ENCODE measurements at regions of chr17 and their contacts with region 1.

Region 1: GRCh38 chr17:48492401-48493298 is 38.2 kb downstream of the HOXB1 start:
- DNase-seq: peak; percentile 70
- ATAC-seq: peak; percentile 89
- H3K4me3 Mint-ChIP-seq: peak overlapping the region; percentile 48
- H3K27ac Mint-ChIP-seq: no peak overlapping the region
- H3K4me1 Mint-ChIP-seq: peaks cover 14% of the 10 kb centered on the region
- H3K27me3 Mint-ChIP-seq: peaks cover 26% of the 10 kb centered on the region
- CTCF ChIP-seq: peak; percentile 96

Region 2: GRCh38 chr17:48335858-48336500 is 156.7 kb before region 1 on chr17:
- CTCF ChIA-PET with region 1: interaction called, 12 read pairs
- POLR2A ChIA-PET with region 1: interaction called, 3 read pairs
- intact Hi-C with region 1: no loop called
- DNase-seq: no peak
- ATAC-seq: peak; percentile 61
- H3K4me3 Mint-ChIP-seq: no peak overlapping the region
- H3K27ac Mint-ChIP-seq: no peak overlapping the region
- H3K4me1 Mint-ChIP-seq: peaks cover 13% of the 10 kb centered on the region
- H3K27me3 Mint-ChIP-seq: no peaks in the 10 kb centered on the region
- CTCF ChIP-seq: peak; percentile 81

Region 3: DNA sequence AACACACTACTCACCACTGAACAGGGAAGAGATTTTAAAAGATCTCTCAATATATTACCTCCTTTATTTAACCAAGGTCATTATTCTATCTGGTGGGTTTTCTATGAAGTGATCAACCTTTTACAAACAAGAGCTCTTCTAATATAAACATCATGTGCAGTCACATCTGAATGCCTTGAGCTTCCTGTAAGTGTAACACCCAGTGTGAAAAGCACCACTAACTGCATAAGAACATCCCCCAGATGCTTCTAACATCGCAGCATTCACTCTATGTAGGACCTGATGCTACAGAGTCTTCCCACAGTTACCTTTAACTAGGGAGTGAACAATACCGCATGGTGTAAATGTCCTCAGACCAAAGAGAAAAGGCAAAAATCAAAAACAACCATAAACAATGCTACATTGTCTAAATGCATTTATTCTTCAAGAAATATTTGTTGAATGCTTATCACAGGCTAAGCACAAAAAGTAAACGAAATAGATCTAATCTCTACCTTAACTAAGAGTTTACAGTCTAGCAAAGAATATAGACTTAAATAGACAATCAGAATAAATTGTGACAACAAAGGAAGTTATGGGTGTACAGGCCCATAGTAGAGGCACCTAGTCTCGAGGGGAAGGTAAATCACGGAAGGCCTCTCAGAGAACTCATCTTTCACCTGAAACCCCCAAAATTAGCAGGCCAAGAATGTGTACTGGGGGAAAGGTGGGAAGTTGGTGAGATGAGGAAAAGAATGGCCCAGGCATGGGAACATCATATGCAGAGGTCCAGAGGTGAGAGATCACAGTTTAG is 78.8 kb before region 1 on chr17:
- CTCF ChIA-PET with region 1: no interaction called
- POLR2A ChIA-PET with region 1: no interaction called
- intact Hi-C with region 1: no loop called
- DNase-seq: no peak
- ATAC-seq: peak; percentile 49
- H3K4me3 Mint-ChIP-seq: peak overlapping the region; percentile 16
- H3K27ac Mint-ChIP-seq: peak overlapping the region; percentile 91
- H3K4me1 Mint-ChIP-seq: peaks cover 82% of the 10 kb centered on the region
- H3K27me3 Mint-ChIP-seq: no peaks in the 10 kb centered on the region
- CTCF ChIP-seq: no peak

Region 4: GRCh38 chr17:48478224-48479013 is 14.2 kb before region 1 on chr17:
- CTCF ChIA-PET with region 1: interaction called, 15 read pairs
- POLR2A ChIA-PET with region 1: interaction called, 4 read pairs
- intact Hi-C with region 1: no loop called
- DNase-seq: peak; percentile 62
- ATAC-seq: peak; percentile 95
- H3K4me3 Mint-ChIP-seq: no peak overlapping the region
- H3K27ac Mint-ChIP-seq: peak overlapping the region; percentile 45
- H3K4me1 Mint-ChIP-seq: peaks cover 23% of the 10 kb centered on the region
- H3K27me3 Mint-ChIP-seq: peaks cover 1% of the 10 kb centered on the region
- CTCF ChIP-seq: peak; percentile 17

Region 5: DNA sequence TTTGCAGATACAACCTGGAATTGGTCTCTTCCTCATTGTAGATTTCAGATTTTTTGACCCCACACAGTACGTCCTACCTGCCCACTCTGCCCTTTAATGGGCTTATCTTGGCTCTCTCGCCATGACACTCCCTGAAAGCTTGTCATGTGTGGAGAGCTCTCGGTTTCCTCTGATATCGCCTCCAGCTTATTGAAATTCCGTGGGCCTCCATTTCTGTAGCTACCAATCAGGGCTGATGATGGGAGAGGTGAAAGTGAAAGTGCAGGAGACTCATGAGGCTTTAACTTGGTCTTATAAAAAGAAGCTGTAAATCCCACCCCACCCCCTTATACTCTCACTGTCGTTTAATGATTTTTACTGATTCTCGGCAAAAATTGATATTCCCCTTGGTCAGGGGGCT is 20.4 kb after region 1 on chr17:
- CTCF ChIA-PET with region 1: interaction called, 10 read pairs
- POLR2A ChIA-PET with region 1: no interaction called
- intact Hi-C with region 1: no loop called
- DNase-seq: peak; percentile 44
- ATAC-seq: peak; percentile 75
- H3K4me3 Mint-ChIP-seq: peak overlapping the region; percentile 57
- H3K27ac Mint-ChIP-seq: peak overlapping the region; percentile 78
- H3K4me1 Mint-ChIP-seq: peaks cover 39% of the 10 kb centered on the region
- H3K27me3 Mint-ChIP-seq: peaks cover 7% of the 10 kb centered on the region
- CTCF ChIP-seq: no peak

Region 6: GRCh38 chr17:48522031-48522653 is 29.5 kb after region 1 on chr17:
- CTCF ChIA-PET with region 1: interaction called, 12 read pairs
- POLR2A ChIA-PET with region 1: no interaction called
- intact Hi-C with region 1: no loop called
- DNase-seq: no peak
- ATAC-seq: no peak
- H3K4me3 Mint-ChIP-seq: no peak overlapping the region
- H3K27ac Mint-ChIP-seq: no peak overlapping the region
- H3K4me1 Mint-ChIP-seq: peaks cover 10% of the 10 kb centered on the region
- H3K27me3 Mint-ChIP-seq: peaks cover 36% of the 10 kb centered on the region
- CTCF ChIP-seq: no peak

Measured in activated CD8-positive, alpha-beta T cell treated with anti-CD3 and anti-CD28 coated beads for 36 hours (primary cell).